Activated T-helper 2 cell treated with anti-CD3 and anti-CD28 coated beads, Interferon-gamma antibody, Interleukin-2, Interleukin-4, amounts not matched to agents 10 μg/mL and 5 μg/mL and 100 μg/mL, durations not matched to agents 14 hours and 24 hours and 36 hours (primary cell): ENCODE measurements at regions of chr6 and their contacts with region 1.

Region 1: DNA sequence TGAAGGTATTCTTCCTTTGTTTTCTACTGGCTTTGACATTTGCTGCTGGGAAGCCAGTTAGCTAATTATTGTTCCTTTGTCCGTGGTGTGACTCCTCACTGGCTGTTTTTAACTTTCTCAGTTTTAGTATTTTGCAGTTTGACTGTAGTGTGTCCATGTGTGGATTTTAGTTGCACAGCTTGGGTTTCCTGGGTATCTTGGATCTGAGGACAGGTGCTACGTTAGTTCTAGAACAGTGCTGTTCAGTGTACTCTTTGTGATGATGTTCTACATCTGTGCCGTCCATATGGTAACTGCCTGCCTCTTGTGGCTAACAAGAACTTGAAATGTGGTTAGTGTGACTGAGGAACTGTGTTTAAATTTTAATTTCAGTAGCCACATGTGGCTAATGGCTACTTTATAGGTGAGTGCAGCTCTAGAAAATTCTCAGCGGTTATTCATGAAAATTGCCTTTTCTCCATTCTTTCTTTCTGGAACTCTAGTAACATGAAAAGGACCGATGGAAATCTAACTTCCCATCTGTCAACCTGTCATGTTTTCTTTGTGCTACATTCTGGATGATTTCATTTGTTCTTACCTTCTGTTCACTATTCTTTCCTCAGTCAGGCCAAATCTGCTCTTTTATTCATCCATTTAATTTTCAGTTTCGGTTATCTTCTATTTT is 7.4 kb downstream of the SNX9 start:
- DNase-seq: no peak
- H3K4me3 Mint-ChIP-seq: no peak overlapping the region
- H3K27ac Mint-ChIP-seq: peak overlapping the region; percentile 36
- H3K4me1 Mint-ChIP-seq: peaks cover 50% of the 10 kb centered on the region
- H3K27me3 Mint-ChIP-seq: peaks cover 1% of the 10 kb centered on the region

Region 2: DNA sequence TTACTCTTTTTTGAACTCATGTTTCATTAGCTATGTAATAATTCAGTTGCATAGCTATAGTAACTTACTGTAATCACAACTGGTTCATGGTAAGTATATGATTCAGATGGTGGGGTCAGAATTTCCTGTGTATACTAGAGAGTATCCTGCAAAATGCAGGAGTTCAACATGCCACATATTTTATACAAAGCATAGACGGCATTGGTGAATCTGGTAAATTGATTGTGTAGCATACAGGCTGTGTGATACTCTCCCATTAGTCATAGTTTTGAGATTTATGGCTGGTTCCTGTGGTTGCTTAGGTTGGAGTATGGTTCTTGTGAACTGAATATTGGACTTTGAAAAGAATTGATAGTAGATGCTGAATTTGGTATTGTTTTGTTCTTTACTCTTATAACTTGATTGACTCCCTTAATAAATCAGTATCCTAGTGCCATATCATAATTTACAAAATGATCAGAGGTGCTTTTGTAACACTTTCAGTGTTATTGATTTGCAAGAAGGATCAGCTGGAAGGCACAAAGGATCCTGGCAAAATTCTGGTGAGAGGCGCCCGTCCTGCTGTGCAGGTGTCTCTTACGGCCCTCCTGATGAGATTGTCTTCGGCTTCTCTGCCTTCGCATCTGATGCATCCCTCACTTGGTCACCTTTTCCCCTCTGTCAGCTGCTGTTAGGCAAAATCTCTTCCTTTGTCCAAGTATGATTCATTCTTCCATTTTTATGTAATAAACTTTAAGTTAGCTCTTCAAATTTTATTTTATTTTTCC is 15.2 kb after region 1 on chr6:
- intact Hi-C with region 1: loop called (anchors 1 kb)
- DNase-seq: no peak
- H3K4me3 Mint-ChIP-seq: no peak overlapping the region
- H3K27ac Mint-ChIP-seq: peak overlapping the region; percentile 20
- H3K4me1 Mint-ChIP-seq: peaks cover 43% of the 10 kb centered on the region
- H3K27me3 Mint-ChIP-seq: peaks cover 14% of the 10 kb centered on the region

Region 3: GRCh38 chr6:157867155-157867559 is 36.7 kb after region 1 on chr6:
- intact Hi-C with region 1: loop called (anchors 2 kb)
- DNase-seq: no peak
- H3K4me3 Mint-ChIP-seq: no peak overlapping the region
- H3K27ac Mint-ChIP-seq: no peak overlapping the region
- H3K4me1 Mint-ChIP-seq: peaks cover 17% of the 10 kb centered on the region
- H3K27me3 Mint-ChIP-seq: peaks cover 18% of the 10 kb centered on the region